Psoas muscle (tissue), 8 donors: ENCODE measurements at regions of chr1 and their contacts with region 1.

Region 1: DNA sequence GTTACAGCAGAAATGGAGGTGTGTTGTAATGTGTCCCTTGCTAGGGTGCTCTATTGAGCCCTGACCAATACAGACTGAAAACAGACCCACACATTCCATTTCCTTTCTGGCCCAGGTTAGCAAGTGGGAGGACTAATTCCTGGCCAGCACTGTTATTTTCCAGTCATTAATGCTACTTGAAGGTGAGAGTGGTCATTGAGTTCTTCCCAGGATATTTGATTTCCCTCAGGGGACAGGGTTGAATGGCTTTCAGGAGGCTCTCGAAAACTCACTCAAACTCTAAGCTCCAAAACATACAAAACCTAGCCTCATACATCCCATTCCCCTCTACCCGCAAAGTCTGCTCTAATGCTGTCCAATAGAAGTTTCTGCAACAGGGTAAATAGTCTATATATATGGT is 6.2 kb downstream of the LRRC52 start:
- DNase-seq: no peak
- ATAC-seq: no peak
- H3K4me3 ChIP-seq: no peak overlapping the region
- H3K27ac ChIP-seq: no peak overlapping the region
- H3K4me1 ChIP-seq: no peaks in the 10 kb centered on the region
- H3K27me3 ChIP-seq: no peaks in the 10 kb centered on the region
- CTCF ChIP-seq: no peak

Region 2: GRCh38 chr1:165330483-165330882 is 219.5 kb before region 1 on chr1:
- intact Hi-C with region 1: no loop called
- DNase-seq: no peak
- ATAC-seq: no peak
- H3K4me3 ChIP-seq: no peak overlapping the region
- H3K27ac ChIP-seq: no peak overlapping the region
- H3K4me1 ChIP-seq: no peaks in the 10 kb centered on the region
- H3K27me3 ChIP-seq: no peaks in the 10 kb centered on the region
- CTCF ChIP-seq: no peak

Region 3: DNA sequence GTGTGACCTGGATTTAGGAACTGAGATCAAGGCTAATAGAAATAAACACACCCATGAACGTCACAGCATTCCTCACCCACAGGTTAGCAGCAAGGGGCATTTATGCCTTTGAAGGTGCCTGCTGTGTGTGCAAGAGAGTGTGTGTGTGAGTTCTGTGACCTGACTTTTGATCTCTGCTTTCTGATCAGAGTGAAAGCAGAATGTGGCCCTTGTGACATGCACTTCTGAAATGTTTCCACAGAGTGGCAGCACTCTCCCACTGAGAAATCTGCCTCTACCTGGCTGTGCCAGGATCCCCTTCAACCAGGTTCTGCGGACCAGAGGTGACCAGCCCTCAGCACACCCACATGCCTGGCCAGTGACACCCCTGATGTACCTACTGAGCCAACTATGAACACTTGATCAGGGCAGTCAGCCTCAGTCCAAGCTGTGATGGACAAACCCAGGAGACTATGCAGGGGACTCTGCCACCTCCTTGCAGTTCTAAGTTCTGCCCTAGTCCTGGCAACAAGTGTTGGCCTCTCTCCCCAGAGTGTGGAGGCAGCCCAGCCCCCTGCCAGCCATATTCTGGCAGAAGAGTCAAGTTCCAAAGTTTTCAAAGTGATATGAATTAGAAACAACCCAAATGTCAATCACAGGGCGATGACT is 146.0 kb before region 1 on chr1:
- intact Hi-C with region 1: loop called (anchors 5 kb)
- DNase-seq: no peak
- ATAC-seq: peak; percentile 50 to 72 (median 58)
- H3K4me3 ChIP-seq: no peak overlapping the region
- H3K27ac ChIP-seq: no peak overlapping the region
- H3K4me1 ChIP-seq: peaks cover 9% of the 10 kb centered on the region
- H3K27me3 ChIP-seq: peaks cover 0 to 6% (median 0%) of the 10 kb centered on the region in 3 donors
- CTCF ChIP-seq: peak; percentile 71

Region 4: GRCh38 chr1:165496501-165496900 is 53.5 kb before region 1 on chr1:
- intact Hi-C with region 1: no loop called
- DNase-seq: no peak
- ATAC-seq: no peak
- H3K4me3 ChIP-seq: no peak overlapping the region
- H3K27ac ChIP-seq: no peak overlapping the region
- H3K4me1 ChIP-seq: no peaks in the 10 kb centered on the region
- H3K27me3 ChIP-seq: no peaks in the 10 kb centered on the region
- CTCF ChIP-seq: no peak

Region 5: GRCh38 chr1:165586435-165586834 is 36.5 kb after region 1 on chr1:
- intact Hi-C with region 1: loop called in 1 of 2 experiments (anchors 5 kb)
- DNase-seq: no peak
- ATAC-seq: no peak
- H3K4me3 ChIP-seq: no peak overlapping the region
- H3K27ac ChIP-seq: no peak overlapping the region
- H3K4me1 ChIP-seq: no peaks in the 10 kb centered on the region
- H3K27me3 ChIP-seq: no peaks in the 10 kb centered on the region
- CTCF ChIP-seq: no peak